Activated B cell treated with CpG ODN at 0.5 μM for 24 hours (primary cell): ENCODE measurements at regions of chr3 and their contacts with region 1.

Region 1: GRCh38 chr3:71006810-71007785 is 576.4 kb downstream of the FOXP1 start:
- DNase-seq: no peak
- ATAC-seq: peak; percentile 35
- H3K4me3 Mint-ChIP-seq: no peak overlapping the region
- H3K27ac Mint-ChIP-seq: peak overlapping the region; percentile 84
- H3K4me1 Mint-ChIP-seq: peaks cover 73% of the 10 kb centered on the region
- H3K27me3 Mint-ChIP-seq: no peaks in the 10 kb centered on the region
- CTCF ChIP-seq: peak; percentile 75

Region 2: GRCh38 chr3:71031914-71032521 is 24.9 kb after region 1 on chr3:
- CTCF ChIA-PET with region 1: interaction called, 3 read pairs
- POLR2A ChIA-PET with region 1: interaction called, 8 read pairs
- intact Hi-C with region 1: loop called (anchors 1 kb)
- DNase-seq: peak; percentile 55
- ATAC-seq: peak; percentile 93
- H3K4me3 Mint-ChIP-seq: peak overlapping the region; percentile 67
- H3K27ac Mint-ChIP-seq: peak overlapping the region; percentile 91
- H3K4me1 Mint-ChIP-seq: peaks cover 93% of the 10 kb centered on the region
- H3K27me3 Mint-ChIP-seq: no peaks in the 10 kb centered on the region
- CTCF ChIP-seq: no peak

Region 3: GRCh38 chr3:71064288-71064955 is 57.3 kb after region 1 on chr3:
- CTCF ChIA-PET with region 1: interaction called, 8 read pairs
- POLR2A ChIA-PET with region 1: interaction called, 59 read pairs
- intact Hi-C with region 1: loop called (anchors 1 kb)
- DNase-seq: peak; percentile 64
- ATAC-seq: peak; percentile 33
- H3K4me3 Mint-ChIP-seq: no peak overlapping the region
- H3K27ac Mint-ChIP-seq: no peak overlapping the region
- H3K4me1 Mint-ChIP-seq: peaks cover 67% of the 10 kb centered on the region
- H3K27me3 Mint-ChIP-seq: no peaks in the 10 kb centered on the region
- CTCF ChIP-seq: no peak

Region 4: DNA sequence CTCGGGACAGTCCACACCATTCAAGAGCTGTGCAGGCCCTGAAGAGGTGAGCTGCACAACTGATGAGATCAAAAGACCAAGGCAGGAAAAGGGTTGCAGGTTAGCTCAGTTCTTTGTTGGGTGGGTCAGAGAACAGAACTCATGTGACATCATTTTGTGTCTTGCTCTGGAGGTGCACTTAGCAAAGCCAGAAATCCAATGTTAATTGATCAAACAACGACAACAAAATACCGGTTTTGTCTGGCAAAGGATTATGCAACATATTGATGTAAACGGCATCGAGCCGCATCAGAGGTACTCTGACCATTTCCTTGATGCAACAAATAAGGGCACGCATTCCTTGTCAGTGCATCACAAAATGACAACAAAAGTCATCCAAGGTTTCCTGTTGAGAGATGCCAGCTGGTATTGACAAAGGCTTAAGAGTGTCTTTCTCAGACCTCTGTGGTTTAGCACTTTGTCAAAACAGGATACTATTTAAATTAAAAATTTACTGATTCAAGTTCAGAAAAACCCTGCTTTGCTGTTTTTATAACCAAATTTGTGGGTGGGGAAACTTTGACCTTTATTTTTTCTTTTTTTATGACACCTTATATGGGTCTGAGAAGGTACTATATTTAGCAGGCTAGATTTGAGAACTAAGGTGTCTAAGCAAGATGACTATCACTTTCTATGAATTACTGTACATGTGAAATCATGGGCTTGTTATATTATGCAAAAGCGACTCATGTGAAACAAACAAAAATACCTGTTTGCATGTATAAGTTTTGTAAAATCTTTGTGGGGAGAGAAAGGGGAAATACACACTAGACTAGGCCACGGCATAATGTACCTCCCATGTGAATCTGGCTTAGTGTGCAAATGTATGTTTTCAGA is 80.3 kb after region 1 on chr3:
- CTCF ChIA-PET with region 1: interaction called, 3 read pairs
- POLR2A ChIA-PET with region 1: interaction called, 25 read pairs
- intact Hi-C with region 1: loop called (anchors 1 kb)
- DNase-seq: no peak
- ATAC-seq: peak; percentile 56
- H3K4me3 Mint-ChIP-seq: peak overlapping the region; percentile 54
- H3K27ac Mint-ChIP-seq: peak overlapping the region; percentile 99
- H3K4me1 Mint-ChIP-seq: peaks cover 97% of the 10 kb centered on the region
- H3K27me3 Mint-ChIP-seq: no peaks in the 10 kb centered on the region
- CTCF ChIP-seq: no peak

Region 5: GRCh38 chr3:71360764-71361163 is 353.7 kb after region 1 on chr3:
- CTCF ChIA-PET with region 1: no interaction called
- POLR2A ChIA-PET with region 1: interaction called, 11 read pairs
- intact Hi-C with region 1: no loop called
- DNase-seq: no peak
- ATAC-seq: peak; percentile 62
- H3K4me3 Mint-ChIP-seq: peak overlapping the region; percentile 81
- H3K27ac Mint-ChIP-seq: peak overlapping the region; percentile 93
- H3K4me1 Mint-ChIP-seq: peaks cover 88% of the 10 kb centered on the region
- H3K27me3 Mint-ChIP-seq: no peaks in the 10 kb centered on the region
- CTCF ChIP-seq: no peak

Region 6: DNA sequence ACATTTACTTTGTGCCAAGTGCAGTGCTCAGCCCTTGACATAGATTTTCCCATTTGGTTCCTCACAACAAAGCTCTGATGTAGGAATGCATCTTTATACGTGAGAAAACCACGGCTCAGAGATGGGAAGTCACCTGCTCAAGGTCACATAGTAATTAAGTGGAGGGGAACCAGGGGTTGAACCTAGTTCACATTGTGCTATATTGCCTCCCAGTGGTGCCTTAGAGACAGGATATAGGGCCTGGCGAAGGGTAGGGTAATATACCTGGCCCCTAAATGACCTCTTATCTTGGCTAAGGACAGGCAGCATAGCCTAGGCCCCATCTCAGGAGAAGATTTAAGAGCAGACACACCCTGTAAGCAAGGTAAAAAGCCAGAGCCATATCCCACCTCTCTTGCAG is 504.9 kb after region 1 on chr3:
- CTCF ChIA-PET with region 1: interaction called, 5 read pairs
- POLR2A ChIA-PET with region 1: no interaction called
- intact Hi-C with region 1: loop called (anchors 1 kb)
- DNase-seq: no peak
- ATAC-seq: peak; percentile 97
- H3K4me3 Mint-ChIP-seq: peak overlapping the region; percentile 5
- H3K27ac Mint-ChIP-seq: no peak overlapping the region
- H3K4me1 Mint-ChIP-seq: peaks cover 22% of the 10 kb centered on the region
- H3K27me3 Mint-ChIP-seq: no peaks in the 10 kb centered on the region
- CTCF ChIP-seq: no peak